Activated T-helper 2 cell treated with anti-CD3 and anti-CD28 coated beads, Interferon-gamma antibody, Interleukin-2, Interleukin-4, amounts not matched to agents 10 μg/mL and 5 μg/mL and 100 μg/mL, durations not matched to agents 14 hours and 24 hours and 36 hours (primary cell): ENCODE measurements at regions of chr9 and their contacts with region 1.

Region 1: GRCh38 chr9:91193658-91194391 is 167.9 kb downstream of the AUH start:
- DNase-seq: peak; percentile 87
- H3K4me3 Mint-ChIP-seq: peak overlapping the region; percentile 77
- H3K27ac Mint-ChIP-seq: peak overlapping the region; percentile 96
- H3K4me1 Mint-ChIP-seq: peaks cover 66% of the 10 kb centered on the region
- H3K27me3 Mint-ChIP-seq: no peaks in the 10 kb centered on the region

Region 2: DNA sequence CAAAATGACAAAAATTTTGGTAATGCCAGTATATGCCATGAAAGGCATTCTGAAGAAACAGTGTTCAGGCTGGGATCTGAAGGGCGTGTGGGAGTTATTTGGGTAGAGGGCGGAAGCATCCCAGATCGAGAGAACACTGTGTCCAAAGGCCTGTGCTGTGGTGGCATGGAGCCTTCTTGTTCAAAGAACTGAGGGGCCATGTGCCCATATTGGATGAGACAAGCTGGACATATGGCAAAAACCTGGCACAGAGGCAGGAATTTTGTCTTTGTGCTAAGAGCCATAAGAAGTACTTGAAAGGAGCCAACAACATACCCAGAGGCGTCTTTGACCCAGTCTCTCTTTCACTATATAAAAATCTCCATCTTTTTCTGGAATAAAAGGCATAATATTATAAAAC is 264.2 kb before region 1 on chr9:
- intact Hi-C with region 1: no loop called
- DNase-seq: no peak
- H3K4me3 Mint-ChIP-seq: no peak overlapping the region
- H3K27ac Mint-ChIP-seq: no peak overlapping the region
- H3K4me1 Mint-ChIP-seq: peaks cover 13% of the 10 kb centered on the region
- H3K27me3 Mint-ChIP-seq: no peaks in the 10 kb centered on the region

Region 3: DNA sequence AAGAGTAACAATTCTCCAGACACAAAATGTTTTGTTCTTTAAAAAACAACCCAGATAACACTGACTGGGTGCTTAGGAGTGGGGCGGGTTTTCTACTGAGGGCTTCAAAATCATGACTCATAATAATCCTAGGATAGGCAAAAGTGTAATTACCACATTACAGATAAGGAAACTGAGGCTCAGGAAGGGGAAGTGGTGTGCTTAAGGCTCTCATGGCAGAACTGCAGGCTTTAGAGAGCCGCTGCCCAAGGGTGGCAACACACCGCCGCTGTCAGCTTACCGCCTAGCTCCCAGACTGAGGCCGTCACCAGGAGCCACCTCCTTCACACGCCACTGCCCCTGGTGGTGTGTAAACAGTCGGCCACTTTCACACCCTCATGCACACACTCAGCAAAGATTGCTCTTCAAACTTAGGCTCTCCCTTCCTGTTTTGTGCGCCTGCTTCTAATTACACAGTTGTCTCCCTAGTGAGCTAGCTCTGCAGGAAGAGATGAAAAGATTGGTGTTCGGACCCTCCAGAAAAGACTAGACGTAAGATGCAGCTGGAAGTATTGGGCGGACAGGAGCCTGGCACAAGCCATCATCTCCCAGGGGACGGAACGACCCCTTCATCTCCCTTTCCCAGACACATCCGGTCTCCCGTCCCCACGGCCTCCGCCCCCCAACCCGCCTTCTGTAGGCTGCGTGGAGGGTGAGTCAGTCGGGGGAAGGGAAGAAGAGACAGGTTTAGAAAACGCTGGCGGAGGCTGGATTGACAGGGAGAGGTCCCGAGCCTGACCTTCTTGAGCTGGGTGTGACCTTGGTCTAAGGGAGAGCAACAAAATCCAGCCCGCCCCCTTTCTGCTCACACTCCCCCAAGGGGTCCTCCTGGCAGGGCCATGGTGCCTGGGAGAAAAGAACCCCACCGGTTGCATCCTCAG is 229.5 kb before region 1 on chr9:
- intact Hi-C with region 1: loop called (anchors 1 kb)
- DNase-seq: peak; percentile 17
- H3K4me3 Mint-ChIP-seq: peak overlapping the region; percentile 69
- H3K27ac Mint-ChIP-seq: peak overlapping the region; percentile 81
- H3K4me1 Mint-ChIP-seq: peaks cover 65% of the 10 kb centered on the region
- H3K27me3 Mint-ChIP-seq: no peaks in the 10 kb centered on the region

Region 4: DNA sequence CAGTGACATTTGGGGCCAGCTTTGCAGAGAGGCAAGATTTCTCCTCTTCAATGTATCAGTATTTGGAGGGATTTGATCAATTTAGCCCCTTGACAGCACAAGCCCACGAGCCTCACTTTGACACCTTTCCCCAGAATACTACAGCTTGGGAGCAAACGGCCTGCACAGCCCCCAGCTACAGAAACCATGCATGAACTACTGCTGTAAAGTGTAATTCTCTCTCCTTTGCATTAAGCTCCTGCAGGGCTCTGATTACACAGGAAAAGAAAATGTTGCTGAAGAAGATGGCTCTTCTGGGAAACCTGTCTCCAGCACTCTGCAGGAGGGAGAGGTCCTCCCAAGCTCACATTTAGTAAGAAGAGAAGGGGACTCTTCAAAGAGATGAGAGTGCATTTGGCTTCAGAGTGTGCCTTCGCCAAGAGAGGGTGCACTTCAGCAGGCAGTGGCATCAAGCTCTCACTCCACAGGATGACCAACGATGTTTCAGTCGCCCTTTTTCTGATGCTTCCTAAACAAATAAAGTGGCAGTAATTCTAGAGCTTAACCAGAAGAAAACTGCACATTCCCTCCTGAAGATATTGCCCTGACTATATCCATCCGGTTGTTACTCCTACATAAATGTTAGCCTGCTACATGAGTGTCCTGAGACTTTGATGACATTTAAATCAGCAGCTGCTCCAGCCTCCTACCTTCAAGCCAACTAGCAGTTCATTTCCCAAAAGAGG is 104.3 kb before region 1 on chr9:
- intact Hi-C with region 1: loop called (anchors 5 kb)
- DNase-seq: no peak
- H3K4me3 Mint-ChIP-seq: no peak overlapping the region
- H3K27ac Mint-ChIP-seq: peak overlapping the region; percentile 36
- H3K4me1 Mint-ChIP-seq: peaks cover 72% of the 10 kb centered on the region
- H3K27me3 Mint-ChIP-seq: no peaks in the 10 kb centered on the region

Region 5: DNA sequence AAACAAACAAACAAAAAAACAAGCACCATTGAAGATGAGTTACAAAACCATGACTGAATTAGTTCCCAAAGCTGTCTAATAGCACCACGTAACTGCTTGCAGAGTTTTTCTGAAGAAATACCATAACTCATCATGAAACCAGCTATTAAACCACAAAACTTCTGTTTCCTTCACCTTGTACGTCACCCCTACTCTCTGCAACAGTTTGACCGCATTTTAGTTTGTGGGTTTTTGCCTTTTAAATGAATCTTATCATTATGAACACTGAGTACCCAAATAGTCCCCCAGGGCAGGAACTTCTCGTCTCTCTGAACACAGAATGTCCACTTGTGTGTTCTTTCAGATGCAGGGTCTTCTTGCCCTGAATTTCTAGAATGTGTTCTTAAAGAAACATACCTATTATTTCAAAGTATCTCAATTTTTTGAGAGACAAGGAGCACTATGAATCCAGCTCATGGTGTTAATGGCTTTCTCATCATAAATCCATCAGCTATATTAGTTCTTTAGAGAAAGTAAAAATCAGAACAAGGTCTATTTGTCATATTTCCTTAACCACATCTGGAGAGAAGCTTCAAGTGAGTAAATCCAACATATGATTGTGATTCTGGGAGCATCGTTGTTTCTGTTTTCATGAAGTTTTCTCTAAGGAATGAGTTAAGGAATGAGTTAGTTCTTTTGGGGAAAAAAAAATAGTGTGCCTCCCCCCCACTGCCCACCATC is 42.7 kb before region 1 on chr9:
- intact Hi-C with region 1: loop called (anchors 1 kb)
- DNase-seq: peak; percentile 64
- H3K4me3 Mint-ChIP-seq: peak overlapping the region; percentile 52
- H3K27ac Mint-ChIP-seq: peak overlapping the region; percentile 96
- H3K4me1 Mint-ChIP-seq: peaks cover 90% of the 10 kb centered on the region
- H3K27me3 Mint-ChIP-seq: no peaks in the 10 kb centered on the region

Region 6: GRCh38 chr9:91207729-91208418 is 14.0 kb after region 1 on chr9:
- intact Hi-C with region 1: loop called (anchors 1 kb)
- DNase-seq: no peak
- H3K4me3 Mint-ChIP-seq: peak overlapping the region; percentile 49
- H3K27ac Mint-ChIP-seq: peak overlapping the region; percentile 93
- H3K4me1 Mint-ChIP-seq: peaks cover 67% of the 10 kb centered on the region
- H3K27me3 Mint-ChIP-seq: no peaks in the 10 kb centered on the region

Region 7: GRCh38 chr9:91359734-91360470 is 166.1 kb after region 1 on chr9:
- intact Hi-C with region 1: loop called (anchors 1 kb)
- DNase-seq: no peak
- H3K4me3 Mint-ChIP-seq: peak overlapping the region; percentile 98
- H3K27ac Mint-ChIP-seq: peak overlapping the region; percentile 99
- H3K4me1 Mint-ChIP-seq: peaks cover 64% of the 10 kb centered on the region
- H3K27me3 Mint-ChIP-seq: no peaks in the 10 kb centered on the region